ENCODE measurements at regions of chr10 and their contacts with region 1.

Region 1: DNA sequence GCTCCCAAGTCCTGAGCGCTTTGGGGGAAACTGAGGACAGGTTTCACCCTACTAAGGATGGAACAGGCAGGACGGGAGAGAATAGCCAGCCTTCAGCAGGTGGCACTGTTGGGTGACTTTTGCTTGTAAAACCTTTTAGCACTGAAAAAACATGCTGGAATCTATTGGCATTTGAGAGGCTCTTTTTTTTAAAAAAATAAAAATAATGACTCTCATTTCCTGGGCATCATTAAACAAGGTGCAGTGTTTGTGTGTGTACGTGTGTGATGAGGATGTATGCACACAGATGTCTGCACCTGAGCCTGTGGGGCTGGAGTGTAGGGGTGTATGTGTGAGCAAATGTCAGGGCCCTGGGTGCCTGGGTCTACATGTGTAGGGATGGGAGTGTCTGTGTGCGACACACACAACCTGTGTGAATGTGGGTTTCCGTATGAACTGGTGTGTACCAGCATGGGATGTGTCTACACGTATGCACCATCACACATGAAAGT is 177.9 kb downstream of the RPS24 start:
- DNase-seq: no peak
- H3K4me3 ChIP-seq: no peak overlapping the region
- H3K27ac ChIP-seq: peak overlapping the region in 1 of 4 donors; percentile 2
- H3K4me1 ChIP-seq: peaks cover 10 to 22% (median 12%) of the 10 kb centered on the region in 4 donors
- H3K27me3 ChIP-seq: no peaks in the 10 kb centered on the region
- CTCF ChIP-seq: peak; percentile 31 to 39 (median 34)
- EP300 ChIP-seq: no peak
- POLR2A ChIP-seq: no peak

Region 2: DNA sequence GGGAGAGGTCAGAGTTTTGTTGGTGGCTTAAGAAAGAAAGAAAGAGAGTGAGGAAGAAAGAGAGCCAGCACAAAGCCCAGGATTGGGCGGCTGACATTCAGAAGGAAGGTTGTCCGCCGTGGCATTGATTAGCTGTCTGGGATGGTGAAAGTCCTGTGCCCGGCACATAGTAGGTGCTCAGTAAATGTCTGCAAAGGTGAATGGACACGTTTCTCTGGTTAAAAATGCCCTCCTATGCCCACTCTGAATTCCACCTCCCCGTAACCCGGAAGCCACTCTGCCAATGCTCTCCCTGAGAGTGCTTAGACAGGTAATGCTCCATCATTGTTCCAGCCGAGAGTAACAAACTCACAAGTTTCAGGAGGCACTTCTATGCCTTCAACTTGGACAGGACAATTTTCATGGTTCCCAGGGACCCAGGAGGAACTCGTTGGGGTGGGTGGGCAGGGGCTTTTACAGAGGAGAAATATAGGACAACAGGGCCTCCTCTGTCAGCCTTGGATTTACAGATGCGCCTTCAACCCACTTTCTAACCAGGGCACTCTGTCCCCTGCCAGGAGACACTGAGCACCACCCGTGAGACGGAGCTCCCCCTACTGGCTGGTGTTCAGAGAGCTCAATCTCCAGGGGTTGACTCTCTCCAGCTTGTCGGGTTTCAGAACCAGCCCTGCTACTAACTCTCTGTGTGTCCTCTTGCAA is 445.7 kb after region 1 on chr10:
- in situ Hi-C with region 1: no loop called
- intact Hi-C with region 1: loop called (anchors 10 kb)
- DNase-seq: peak; percentile 86
- H3K4me3 ChIP-seq: no peak overlapping the region
- H3K27ac ChIP-seq: peak overlapping the region; percentile 28 to 44 (median 40)
- H3K4me1 ChIP-seq: peaks cover 0 to 8% (median 2%) of the 10 kb centered on the region in 4 donors
- H3K27me3 ChIP-seq: no peaks in the 10 kb centered on the region
- CTCF ChIP-seq: peak; percentile 58 to 78 (median 73)
- EP300 ChIP-seq: no peak
- POLR2A ChIP-seq: no peak

Region 3: DNA sequence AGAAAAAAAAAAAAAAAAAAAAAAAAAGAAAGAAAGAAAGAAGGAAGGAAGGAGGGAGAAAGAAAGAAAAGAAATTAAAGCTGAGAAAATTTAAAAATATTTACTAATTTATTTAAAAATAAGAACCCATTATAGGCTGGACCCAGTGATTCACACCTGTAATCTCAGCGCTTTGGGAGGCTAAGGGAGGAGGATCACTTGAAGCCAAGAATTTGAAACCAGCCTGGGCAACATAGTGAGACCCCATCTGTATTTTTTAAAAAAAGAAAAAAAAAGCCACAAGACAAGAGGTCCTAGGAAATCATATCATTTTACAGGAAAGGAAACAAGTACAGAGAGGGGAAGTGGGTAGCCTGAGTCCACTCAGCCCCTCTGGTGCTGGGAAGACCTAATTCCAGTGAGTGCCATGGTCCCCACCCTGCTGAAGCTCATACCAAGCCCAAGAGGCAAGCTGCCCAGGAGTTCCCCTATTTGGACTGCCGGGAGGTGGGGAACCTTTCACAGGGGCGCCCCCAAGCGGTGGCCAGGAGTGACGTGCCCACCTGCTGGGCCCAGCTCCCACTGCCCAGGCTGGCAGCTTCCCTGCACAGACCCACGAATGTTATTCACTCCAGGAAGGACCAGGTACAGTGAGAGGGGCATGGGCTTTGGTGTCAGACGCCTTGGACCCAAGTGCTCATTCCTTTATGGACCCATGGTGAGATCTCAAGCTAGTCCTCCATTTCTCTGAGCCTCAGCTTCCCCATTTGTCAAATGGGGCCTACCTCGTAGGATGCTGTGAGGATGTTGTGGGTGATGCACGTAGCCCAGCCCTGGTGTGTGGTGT is 990.8 kb after region 1 on chr10:
- in situ Hi-C with region 1: loop called in 1 of 4 experiments (anchors 25 kb)
- intact Hi-C with region 1: loop called (anchors 5 kb)
- DNase-seq: peak; percentile 38
- H3K4me3 ChIP-seq: no peak overlapping the region
- H3K27ac ChIP-seq: peak overlapping the region in 2 of 4 donors; percentile 7 to 10
- H3K4me1 ChIP-seq: peaks cover 0 to 3% (median 0%) of the 10 kb centered on the region in 4 donors
- H3K27me3 ChIP-seq: no peaks in the 10 kb centered on the region
- CTCF ChIP-seq: peak in 3 of 5 experiments; percentile 27 to 30 (median 28)
- EP300 ChIP-seq: no peak
- POLR2A ChIP-seq: no peak